Vagina (tissue), 2 donors: ENCODE measurements at regions of chr1 and their contacts with region 1.

Region 1: GRCh38 chr1:26999440-26999987 is 6.0 kb downstream of the TRNP1 start:
- DNase-seq: no peak
- H3K4me3 ChIP-seq: peak overlapping the region in 1 of 2 donors; percentile 9
- H3K27ac ChIP-seq: peak overlapping the region; percentile 91
- H3K4me1 ChIP-seq: peaks cover 89% of the 10 kb centered on the region
- H3K27me3 ChIP-seq: no peaks in the 10 kb centered on the region
- CTCF ChIP-seq: peak in 1 of 3 experiments; percentile 22
- POLR2A ChIP-seq: no peak

Region 2: DNA sequence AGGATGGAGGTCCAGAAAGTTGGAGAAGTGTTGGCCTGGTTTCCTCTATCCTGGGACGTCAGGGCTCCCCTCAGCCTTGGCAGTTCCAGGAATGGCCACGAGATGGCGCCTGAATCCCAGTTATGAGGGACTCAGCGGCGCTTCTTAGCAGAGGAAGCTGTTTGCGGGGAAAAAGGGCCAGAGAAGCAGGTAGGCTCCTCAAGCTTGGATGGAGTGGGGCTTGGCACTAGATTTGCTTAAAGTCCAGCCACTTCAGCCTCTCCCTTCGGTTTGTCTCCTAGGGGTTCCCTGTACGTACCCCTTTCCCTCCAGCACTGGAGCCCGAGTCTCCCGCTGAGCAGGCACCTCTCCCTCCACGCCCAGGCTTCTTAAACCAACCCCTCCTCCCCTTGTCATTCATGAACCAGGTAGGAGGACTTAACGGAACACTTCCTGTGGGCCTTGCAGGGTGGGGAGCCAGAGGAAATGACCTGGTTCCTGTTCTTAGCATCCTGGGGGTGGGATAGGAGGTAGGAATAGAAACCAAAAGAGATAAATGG is 45.2 kb after region 1 on chr1:
- intact Hi-C with region 1: loop called (anchors 1 kb)
- DNase-seq: no peak
- H3K4me3 ChIP-seq: peak overlapping the region in 1 of 2 donors; percentile 13
- H3K27ac ChIP-seq: no peak overlapping the region
- H3K4me1 ChIP-seq: peaks cover 17% of the 10 kb centered on the region
- H3K27me3 ChIP-seq: no peaks in the 10 kb centered on the region
- CTCF ChIP-seq: peak; percentile 91 to 96 (median 95)
- POLR2A ChIP-seq: no peak